GM23248 (cell line): ENCODE measurements at regions of chr1 and their contacts with region 1.

Region 1: DNA sequence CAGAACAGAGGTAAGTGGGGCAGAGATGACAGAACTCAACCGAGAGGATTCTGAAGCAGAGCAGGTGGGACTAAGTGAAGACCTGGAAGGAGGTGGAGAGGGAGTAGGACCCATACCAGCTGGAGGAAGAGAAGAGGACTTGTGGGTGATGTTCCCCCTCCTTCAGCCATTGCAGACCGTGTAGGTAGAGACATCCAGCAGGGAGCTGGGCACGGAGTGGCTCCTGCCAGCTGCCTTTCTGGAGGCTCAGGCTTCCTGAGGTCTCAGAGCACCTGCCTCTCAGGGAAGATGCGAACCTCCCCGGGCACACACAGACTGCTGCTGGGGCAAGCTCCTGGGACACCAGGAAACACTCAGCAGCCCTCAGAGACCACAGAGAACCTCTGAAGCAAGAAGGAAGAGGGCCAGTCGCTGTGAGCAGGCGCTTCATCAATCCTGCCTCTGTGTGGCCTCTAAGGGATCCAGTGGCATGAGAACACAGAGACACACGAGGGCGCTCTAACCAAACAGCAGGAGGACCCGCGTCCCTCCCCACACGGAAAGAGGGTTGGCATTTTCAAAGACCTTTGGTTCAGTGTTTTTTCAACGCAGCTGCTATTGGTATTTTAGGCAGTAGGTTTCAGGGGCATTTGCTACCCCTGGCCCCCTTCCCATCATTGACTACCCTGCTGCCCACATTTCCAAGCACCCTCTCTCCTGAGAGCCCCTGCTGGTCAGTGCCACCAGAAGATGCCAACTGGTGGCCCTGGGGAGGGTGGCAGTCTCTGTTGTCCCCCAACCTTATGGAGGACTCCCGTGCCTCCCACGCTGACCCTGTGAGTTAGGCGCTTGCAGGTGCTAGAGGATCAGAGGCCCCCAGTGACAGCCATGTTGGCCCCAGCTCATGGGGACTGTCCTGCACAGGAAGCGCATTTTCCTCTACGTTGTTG is 89.6 kb upstream of the EDN2 start:
- DNase-seq: peak; percentile 91
- H3K4me3 ChIP-seq: no peak overlapping the region
- H3K27ac ChIP-seq: no peak overlapping the region
- H3K4me1 ChIP-seq: peaks cover 4% of the 10 kb centered on the region; the same call in 1 of the 2 replicates
- H3K27me3 ChIP-seq: no peaks in the 10 kb centered on the region

Region 2: DNA sequence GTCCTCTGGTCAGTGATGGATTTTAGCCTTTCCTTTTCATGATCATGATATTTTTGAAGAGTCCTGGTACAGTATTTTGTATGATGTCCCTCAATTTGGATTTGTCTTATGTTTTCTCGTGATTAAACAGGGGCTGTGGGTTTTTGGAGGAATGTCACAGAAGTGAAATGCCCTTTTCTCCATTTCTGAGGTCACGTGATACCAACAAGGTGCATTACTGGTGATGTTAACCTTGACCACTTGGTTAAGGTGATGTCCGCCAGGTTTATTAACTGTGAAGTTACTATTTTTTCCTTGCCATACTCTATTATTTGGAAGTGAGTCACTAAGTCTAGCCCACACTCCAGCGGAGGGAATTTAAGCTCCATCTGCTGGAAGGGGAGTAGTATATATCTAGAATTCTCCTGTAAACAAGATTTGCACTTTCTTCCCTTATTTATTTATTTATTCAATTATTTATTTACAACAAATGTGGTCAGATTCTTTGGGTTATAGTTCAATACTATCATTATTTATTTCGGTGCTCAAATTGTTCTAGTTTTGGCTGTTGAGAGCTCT is 221.2 kb after region 1 on chr1:
- in situ Hi-C with region 1: loop called (anchors 10 kb)
- DNase-seq: peak; percentile 76
- H3K4me3 ChIP-seq: no peak overlapping the region
- H3K27ac ChIP-seq: no peak overlapping the region
- H3K4me1 ChIP-seq: no peaks in the 10 kb centered on the region
- H3K27me3 ChIP-seq: no peaks in the 10 kb centered on the region

Region 3: GRCh38 chr1:41851589-41851988 is 277.5 kb after region 1 on chr1:
- in situ Hi-C with region 1: no loop called
- DNase-seq: peak; percentile 85
- H3K4me3 ChIP-seq: no peak overlapping the region
- H3K27ac ChIP-seq: 0 out of 2 replicates have a peak overlapping the region, but pooled peaks have one; percentile 9
- H3K4me1 ChIP-seq: peaks cover 18% of the 10 kb centered on the region
- H3K27me3 ChIP-seq: no peaks in the 10 kb centered on the region

Region 4: GRCh38 chr1:42146626-42147320 is 572.7 kb after region 1 on chr1:
- in situ Hi-C with region 1: loop called (anchors 25 kb)
- DNase-seq: peak; percentile 69
- H3K4me3 ChIP-seq: no peak overlapping the region
- H3K27ac ChIP-seq: no peak overlapping the region
- H3K4me1 ChIP-seq: no peaks in the 10 kb centered on the region
- H3K27me3 ChIP-seq: peaks cover 52% of the 10 kb centered on the region